Breast epithelium (tissue), 4 donors: ENCODE measurements at regions of chr5 and their contacts with region 1.

Region 1: GRCh38 chr5:41896230-41896629 is 7.9 kb upstream of the RIMOC1 start:
- DNase-seq: no peak
- H3K4me3 ChIP-seq: no peak overlapping the region
- H3K27ac ChIP-seq: no peak overlapping the region
- H3K4me1 ChIP-seq: no peaks in the 10 kb centered on the region
- H3K27me3 ChIP-seq: peaks cover 0 to 11% of the 10 kb centered on the region in 2 donors
- CTCF ChIP-seq: no peak
- POLR2A ChIP-seq: no peak

Region 2: DNA sequence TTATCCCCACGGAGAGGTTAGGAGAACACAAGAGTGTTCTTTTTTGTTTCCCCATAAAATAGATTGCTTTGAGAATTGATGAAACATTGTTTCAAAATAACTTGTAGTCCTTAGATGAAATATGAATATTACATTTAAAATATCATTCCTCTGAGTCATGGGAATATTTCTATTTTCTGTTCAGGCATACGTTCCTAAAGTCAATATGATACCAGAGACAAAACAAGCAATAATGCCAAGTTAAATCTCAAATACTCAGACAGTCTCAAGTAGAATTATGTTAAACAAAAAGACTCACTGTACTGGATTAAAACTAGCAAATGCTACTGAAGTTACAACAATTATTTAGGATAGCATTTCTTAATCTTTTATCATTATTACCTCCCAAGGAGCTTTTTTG is 571.2 kb before region 1 on chr5:
- intact Hi-C with region 1: no loop called
- DNase-seq: no peak
- H3K4me3 ChIP-seq: no peak overlapping the region
- H3K27ac ChIP-seq: no peak overlapping the region
- H3K4me1 ChIP-seq: no peaks in the 10 kb centered on the region
- H3K27me3 ChIP-seq: no peaks in the 10 kb centered on the region
- CTCF ChIP-seq: no peak
- POLR2A ChIP-seq: no peak

Region 3: GRCh38 chr5:41885286-41885685 is 10.9 kb before region 1 on chr5:
- intact Hi-C with region 1: no loop called
- DNase-seq: no peak
- H3K4me3 ChIP-seq: no peak overlapping the region
- H3K27ac ChIP-seq: no peak overlapping the region
- H3K4me1 ChIP-seq: no peaks in the 10 kb centered on the region
- H3K27me3 ChIP-seq: no peaks in the 10 kb centered on the region
- CTCF ChIP-seq: no peak
- POLR2A ChIP-seq: no peak

Region 4: DNA sequence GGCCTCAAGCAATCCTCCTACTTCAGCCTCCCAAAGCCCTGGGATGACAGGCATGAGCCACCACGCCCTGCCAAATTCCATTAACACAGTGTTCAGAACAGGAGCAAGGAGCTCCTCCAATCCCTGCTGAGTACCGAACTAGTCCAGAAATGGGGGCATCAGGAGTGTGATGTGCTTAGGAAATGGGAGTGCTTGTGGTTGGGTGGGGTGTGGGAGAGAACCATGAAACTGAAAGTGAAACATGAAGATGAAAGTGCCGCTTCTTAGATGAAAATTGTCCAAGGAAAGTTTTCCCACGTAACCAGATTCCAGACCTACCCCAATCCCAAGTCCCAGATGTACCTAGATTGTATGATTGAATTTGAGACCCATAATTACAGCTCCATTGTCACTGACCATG is 1207.8 kb after region 1 on chr5:
- intact Hi-C with region 1: loop called (anchors 5 kb)
- DNase-seq: no peak
- H3K4me3 ChIP-seq: no peak overlapping the region
- H3K27ac ChIP-seq: no peak overlapping the region
- H3K4me1 ChIP-seq: no peaks in the 10 kb centered on the region
- H3K27me3 ChIP-seq: no peaks in the 10 kb centered on the region
- CTCF ChIP-seq: no peak
- POLR2A ChIP-seq: no peak